AG04449 (cell line): ENCODE measurements at regions of chr11 and their contacts with region 1.

Region 1: GRCh38 chr11:61792310-61793085 is at the starts of genes FEN1 and TMEM258:
- DNase-seq: peak; percentile 75
- H3K4me3 ChIP-seq: peak within 1 kb of the TSS; percentile 98
- CTCF ChIP-seq: no peak

Region 2: GRCh38 chr11:61609980-61610366 is 182.5 kb before region 1 on chr11:
- CTCF ChIA-PET with region 1: no interaction called
- POLR2A ChIA-PET with region 1: no interaction called
- DNase-seq: no peak
- H3K4me3 ChIP-seq: no peak overlapping the region
- CTCF ChIP-seq: no peak

Region 3: DNA sequence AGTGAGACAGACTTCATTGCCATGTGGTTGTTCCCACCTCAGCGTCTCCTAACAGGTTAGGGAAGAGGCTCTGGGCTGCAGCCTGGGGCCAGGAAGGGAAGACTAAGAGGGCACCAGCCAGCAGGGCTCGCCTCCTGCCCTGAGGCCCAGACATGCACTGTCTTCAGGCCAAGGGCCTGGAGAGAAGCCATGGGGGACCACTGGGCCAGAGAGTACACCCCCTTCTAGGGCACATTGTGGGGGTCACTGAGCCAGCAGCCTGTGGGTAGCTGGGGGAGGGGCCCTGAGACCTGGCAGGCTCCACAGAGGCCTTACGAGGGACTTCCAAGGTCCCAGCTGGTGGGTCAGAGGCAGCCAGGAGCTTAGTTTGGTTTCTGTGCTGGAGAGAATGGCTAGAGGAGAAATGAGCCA is 65.1 kb before region 1 on chr11:
- CTCF ChIA-PET with region 1: no interaction called
- POLR2A ChIA-PET with region 1: no interaction called
- DNase-seq: no peak
- H3K4me3 ChIP-seq: no peak overlapping the region
- CTCF ChIP-seq: no peak

Region 4: GRCh38 chr11:61776551-61777075 is 15.9 kb before region 1 on chr11:
- CTCF ChIA-PET with region 1: interaction called, 92 read pairs
- POLR2A ChIA-PET with region 1: no interaction called
- DNase-seq: no peak
- H3K4me3 ChIP-seq: no peak overlapping the region
- CTCF ChIP-seq: peak; percentile 80

Region 5: GRCh38 chr11:61827571-61828378 is 35.3 kb after region 1 on chr11 and contains the start of gene FADS2:
- CTCF ChIA-PET with region 1: interaction called, 53 read pairs
- POLR2A ChIA-PET with region 1: interaction called, 4 read pairs
- DNase-seq: peak; percentile 62
- H3K4me3 ChIP-seq: peak within 1 kb of the TSS; percentile 84
- CTCF ChIP-seq: peak; percentile 23

Region 6: GRCh38 chr11:61871158-61871597 is 78.7 kb after region 1 on chr11:
- CTCF ChIA-PET with region 1: interaction called, 38 read pairs
- POLR2A ChIA-PET with region 1: no interaction called
- DNase-seq: peak; percentile 12
- H3K4me3 ChIP-seq: peak overlapping the region; percentile 21
- CTCF ChIP-seq: peak; percentile 97

Region 7: GRCh38 chr11:61947486-61948210 is 155.2 kb after region 1 on chr11:
- CTCF ChIA-PET with region 1: interaction called, 173 read pairs
- POLR2A ChIA-PET with region 1: interaction called, 3 read pairs
- DNase-seq: no peak
- H3K4me3 ChIP-seq: no peak overlapping the region
- CTCF ChIP-seq: peak; percentile 94

Region 8: GRCh38 chr11:62123669-62124185 is 331.2 kb after region 1 on chr11 and contains the start of gene INCENP:
- CTCF ChIA-PET with region 1: interaction called, 13 read pairs
- POLR2A ChIA-PET with region 1: no interaction called
- DNase-seq: peak; percentile 94
- H3K4me3 ChIP-seq: peak within 1 kb of the TSS; percentile 100
- CTCF ChIP-seq: no peak